Caki2 (cell line): ENCODE measurements at regions of chr10 and their contacts with region 1.

Region 1: GRCh38 chr10:4953405-4953804 is 9.8 kb upstream of the AKR1C1 start:
- DNase-seq: no peak

Region 2: DNA sequence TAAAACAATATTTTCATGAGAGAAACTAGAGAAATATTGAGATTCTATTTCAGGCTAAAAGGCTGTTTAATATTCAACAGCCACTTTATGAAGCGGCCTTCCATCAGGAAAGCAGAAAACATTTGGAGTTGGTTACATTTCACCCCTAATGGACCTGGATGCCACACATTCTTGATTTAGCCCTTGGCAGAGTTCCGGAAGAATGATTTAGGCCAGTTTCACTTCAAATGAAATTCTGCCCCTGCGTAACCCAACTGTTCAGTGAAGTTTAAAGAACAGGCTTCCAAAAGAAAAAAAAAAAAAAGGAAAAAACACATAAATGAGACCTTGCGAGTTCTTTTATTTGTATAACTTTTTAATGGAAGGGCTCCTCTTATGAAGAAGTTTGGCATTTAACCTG is 366.6 kb before region 1 on chr10:
- in situ Hi-C with region 1: no loop called
- DNase-seq: peak; percentile 11

Region 3: DNA sequence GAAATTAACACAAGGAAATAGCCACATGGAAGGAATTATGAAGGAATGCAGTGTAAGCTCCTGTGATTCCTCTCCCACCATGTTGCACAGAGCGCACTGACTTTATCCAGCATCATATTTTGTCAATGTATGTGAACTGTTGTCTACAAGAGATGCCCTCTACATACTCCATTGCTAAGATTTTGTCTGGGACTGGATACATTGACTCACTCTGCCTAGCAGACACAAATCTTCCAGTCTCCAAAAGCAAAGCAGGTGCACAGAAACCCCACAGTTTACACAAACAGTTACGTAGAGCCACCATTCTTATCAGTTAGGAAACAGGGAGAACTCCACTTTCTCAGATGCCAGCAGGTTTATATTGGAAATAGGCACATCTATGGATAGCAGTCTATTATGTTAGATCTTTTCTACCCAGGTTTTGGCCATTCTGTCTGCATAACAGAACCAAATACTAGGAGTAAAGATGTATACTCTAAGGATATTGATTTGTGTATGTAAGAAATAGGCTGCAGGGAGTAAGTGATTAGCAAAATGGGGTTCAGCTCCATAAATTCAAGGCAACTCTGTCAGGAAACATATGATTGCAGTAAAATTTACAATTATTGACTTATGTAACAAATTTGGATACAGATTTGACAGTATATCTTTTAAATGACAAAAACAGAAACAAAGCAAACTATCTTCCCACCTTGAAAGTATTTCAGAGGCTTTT is 48.8 kb after region 1 on chr10:
- in situ Hi-C with region 1: loop called (anchors 10 kb)
- DNase-seq: no peak